ENCODE measurements at regions of chr4 and their contacts with region 1.

Region 1: DNA sequence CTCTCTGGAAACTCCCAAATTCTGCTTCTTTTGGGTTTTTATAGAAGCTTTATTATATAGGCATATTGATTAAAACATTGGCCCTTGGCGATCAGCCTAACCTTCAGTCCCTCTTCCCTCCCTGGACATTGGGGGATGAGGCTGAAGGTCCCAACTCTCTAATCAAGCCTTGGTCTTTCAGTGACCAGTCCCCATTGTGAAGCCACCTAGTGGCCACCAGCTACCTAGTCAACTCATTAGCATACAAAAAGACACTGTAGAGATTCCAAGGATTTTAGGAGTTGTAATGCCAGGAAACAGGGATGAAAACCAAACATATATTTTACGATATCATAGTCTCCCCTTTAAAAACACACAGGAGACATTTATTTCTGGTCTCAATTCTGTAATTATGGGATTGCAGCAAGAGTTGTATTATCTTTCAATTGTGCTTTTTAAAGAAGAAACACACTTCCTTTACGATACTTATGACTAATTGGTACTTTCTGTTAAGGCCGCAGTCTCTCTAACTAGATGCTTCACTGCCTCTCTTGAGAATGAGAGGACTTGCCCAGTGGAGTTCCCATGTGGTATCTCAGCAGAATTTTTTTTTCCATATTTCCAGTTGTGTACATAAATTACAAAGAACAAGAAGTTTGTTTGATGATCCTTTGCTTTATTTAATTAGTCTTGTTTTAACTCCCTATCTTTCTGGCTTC is 58.2 kb downstream of the WDR17 start:
- DNase-seq: peak in 5 of 10 donors; percentile 6 to 66 (median 36)

Region 2: GRCh38 chr4:175998777-175999176 is 125.1 kb before region 1 on chr4:
- intact Hi-C with region 1: no loop called
- DNase-seq: no peak

Region 3: GRCh38 chr4:176107695-176108094 is 16.2 kb before region 1 on chr4:
- intact Hi-C with region 1: loop called (anchors 2 kb)
- DNase-seq: no peak

Region 4: DNA sequence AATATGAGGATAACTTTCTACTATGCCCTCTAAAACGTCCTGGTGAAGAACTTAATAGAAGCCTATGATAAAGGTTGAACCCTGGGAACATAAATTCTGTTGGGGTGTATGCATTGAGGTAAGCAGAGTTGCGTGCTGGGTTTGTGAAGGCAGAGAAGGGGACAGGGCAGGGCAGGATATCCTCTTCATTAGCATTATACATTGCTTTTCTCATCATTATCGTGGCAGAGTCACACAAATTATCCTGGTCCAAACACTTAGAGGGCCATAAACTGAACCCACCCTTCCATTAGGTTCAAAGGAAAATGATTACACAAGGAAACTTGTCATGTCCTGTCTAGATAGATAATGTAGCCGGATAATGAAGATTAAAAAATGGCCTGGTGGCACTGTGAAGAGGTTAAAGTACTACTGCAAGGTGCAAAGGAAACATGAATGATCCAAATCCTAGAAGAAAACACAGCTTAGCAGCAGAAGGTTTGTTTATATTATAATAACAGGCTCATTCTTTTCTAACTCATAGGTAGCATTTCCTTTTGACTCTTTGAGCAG is 385.0 kb after region 1 on chr4:
- intact Hi-C with region 1: no loop called
- DNase-seq: no peak